Gastrocnemius medialis (tissue), 4 donors: ENCODE measurements at regions of chr20 and their contacts with region 1.

Region 1: GRCh38 chr20:32031007-32031958 is 20.8 kb upstream of the HCK start:
- DNase-seq: peak; percentile 40 to 56
- ATAC-seq: peak; percentile 71 to 80
- H3K4me3 ChIP-seq: peak overlapping the region; percentile 25 to 43 (median 35)
- H3K27ac ChIP-seq: no peak overlapping the region
- H3K4me1 ChIP-seq: peaks cover 0 to 3% of the 10 kb centered on the region in 2 donors
- H3K27me3 ChIP-seq: peaks cover 8 to 12% (median 12%) of the 10 kb centered on the region in 3 donors
- CTCF ChIP-seq: peak; percentile 79 to 89 (median 88)
- POLR2A ChIP-seq: no peak

Region 2: GRCh38 chr20:31849455-31849925 is 181.8 kb before region 1 on chr20:
- in situ Hi-C with region 1: loop called in 2 of 4 experiments (anchors 10 kb)
- intact Hi-C with region 1: loop called (anchors 5 kb)
- DNase-seq: no peak
- ATAC-seq: no peak
- H3K4me3 ChIP-seq: no peak overlapping the region
- H3K27ac ChIP-seq: no peak overlapping the region
- H3K4me1 ChIP-seq: peaks cover 3 to 11% of the 10 kb centered on the region in 2 donors
- H3K27me3 ChIP-seq: peaks cover 0 to 9% (median 4%) of the 10 kb centered on the region in 3 donors
- CTCF ChIP-seq: no peak
- POLR2A ChIP-seq: no peak

Region 3: DNA sequence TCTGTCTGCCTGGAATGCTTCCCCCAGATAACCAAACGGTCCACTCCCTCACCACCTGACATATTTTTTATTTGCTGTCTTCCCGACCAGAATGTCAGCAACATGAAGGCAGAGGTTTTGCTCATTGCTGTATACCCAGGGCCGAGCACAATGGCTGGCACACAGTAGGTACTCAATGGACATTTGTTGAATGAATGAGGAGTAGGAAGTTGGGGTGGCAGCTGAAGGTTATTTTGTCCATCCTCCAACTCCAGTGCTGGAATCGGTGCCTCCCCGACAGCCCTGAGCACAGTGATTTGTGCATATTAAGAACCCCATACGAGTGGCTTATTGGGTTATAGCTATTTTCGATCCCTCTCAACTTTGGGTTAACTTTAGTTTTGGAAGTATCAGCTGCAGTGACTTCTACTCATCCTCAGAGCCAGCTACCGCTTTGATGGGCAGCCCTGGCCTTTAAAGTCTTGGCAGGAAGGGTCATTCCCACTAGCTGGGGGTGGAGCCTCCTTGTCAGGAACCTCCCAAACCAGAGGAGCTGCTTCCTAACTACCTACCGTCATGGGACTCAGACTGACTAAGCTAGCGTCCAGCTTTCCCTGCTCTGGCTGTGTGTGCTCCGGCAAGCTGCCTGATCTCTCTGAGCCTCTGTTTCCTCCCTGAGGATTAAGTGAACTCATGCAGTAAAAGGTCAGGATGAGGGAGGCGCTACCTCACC is 171.1 kb before region 1 on chr20:
- in situ Hi-C with region 1: loop called in 2 of 4 experiments (anchors 10 kb)
- intact Hi-C with region 1: no loop called
- DNase-seq: no peak
- ATAC-seq: no peak
- H3K4me3 ChIP-seq: peak overlapping the region in 1 of 4 donors; percentile 56
- H3K27ac ChIP-seq: no peak overlapping the region
- H3K4me1 ChIP-seq: peaks cover 4 to 13% of the 10 kb centered on the region in 2 donors
- H3K27me3 ChIP-seq: peaks cover 27 to 42% (median 32%) of the 10 kb centered on the region in 3 donors
- CTCF ChIP-seq: no peak
- POLR2A ChIP-seq: no peak

Region 4: DNA sequence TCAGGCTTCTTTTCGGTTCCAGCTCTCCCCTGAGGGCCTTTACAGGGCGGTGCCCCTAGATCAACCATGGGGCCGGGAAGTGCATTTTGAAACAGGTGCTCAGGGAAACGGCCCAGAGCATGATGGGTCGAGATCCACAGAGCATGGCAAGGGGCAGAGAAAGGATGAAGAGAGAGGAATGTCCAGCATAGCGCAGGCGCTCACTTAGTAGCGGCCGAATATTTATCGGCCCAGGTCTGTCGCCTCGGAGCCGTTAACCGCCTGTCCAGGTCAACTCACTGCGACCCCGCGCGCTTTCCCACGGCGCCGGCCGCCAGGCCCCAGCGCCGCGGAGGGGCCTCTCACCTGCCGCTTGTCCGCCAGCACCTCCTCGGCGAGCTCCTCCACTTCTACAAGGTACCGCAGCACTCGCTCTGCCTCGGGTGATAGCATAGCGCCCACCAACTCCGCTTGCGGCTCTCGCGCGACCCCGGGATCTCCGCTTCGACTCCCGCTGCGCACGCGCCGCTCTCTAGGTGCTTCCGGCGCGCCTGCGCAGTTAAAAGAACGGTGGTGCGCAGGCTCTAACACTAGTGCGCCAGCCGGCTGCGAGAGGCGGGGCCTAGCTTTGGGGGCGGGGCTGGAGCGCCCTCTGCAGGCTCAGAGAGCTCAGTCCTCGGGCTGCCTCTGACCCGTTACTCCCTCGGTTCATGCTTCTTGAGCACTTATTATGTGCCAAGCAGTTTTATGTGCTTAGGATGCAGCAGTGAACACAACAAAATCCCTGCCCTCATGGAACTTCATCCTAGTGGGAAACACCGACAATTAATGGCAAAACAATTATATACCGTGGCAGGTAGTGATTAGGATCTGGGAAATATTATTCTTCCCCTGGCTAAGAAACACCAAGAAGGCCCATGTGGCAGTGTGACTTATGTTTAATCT is 79.5 kb before region 1 on chr20 and contains the start of gene PDRG1:
- in situ Hi-C with region 1: no loop called
- intact Hi-C with region 1: loop called (anchors 2 kb)
- DNase-seq: peak; percentile 90 to 93
- ATAC-seq: peak; percentile 95 to 97
- H3K4me3 ChIP-seq: peak within 1 kb of the TSS; percentile 87 to 99 (median 90)
- H3K27ac ChIP-seq: peak within 1 kb of the TSS; percentile 83 to 92 (median 86)
- H3K4me1 ChIP-seq: peaks cover 10 to 11% of the 10 kb centered on the region in 2 donors
- H3K27me3 ChIP-seq: no peaks in the 10 kb centered on the region
- CTCF ChIP-seq: peak; percentile 83 to 97 (median 89)
- POLR2A ChIP-seq: peak; percentile 72 to 77
- total RNA-seq, gene PDRG1: 7.0 to 12.9 (median 9.6) TPM

Region 5: DNA sequence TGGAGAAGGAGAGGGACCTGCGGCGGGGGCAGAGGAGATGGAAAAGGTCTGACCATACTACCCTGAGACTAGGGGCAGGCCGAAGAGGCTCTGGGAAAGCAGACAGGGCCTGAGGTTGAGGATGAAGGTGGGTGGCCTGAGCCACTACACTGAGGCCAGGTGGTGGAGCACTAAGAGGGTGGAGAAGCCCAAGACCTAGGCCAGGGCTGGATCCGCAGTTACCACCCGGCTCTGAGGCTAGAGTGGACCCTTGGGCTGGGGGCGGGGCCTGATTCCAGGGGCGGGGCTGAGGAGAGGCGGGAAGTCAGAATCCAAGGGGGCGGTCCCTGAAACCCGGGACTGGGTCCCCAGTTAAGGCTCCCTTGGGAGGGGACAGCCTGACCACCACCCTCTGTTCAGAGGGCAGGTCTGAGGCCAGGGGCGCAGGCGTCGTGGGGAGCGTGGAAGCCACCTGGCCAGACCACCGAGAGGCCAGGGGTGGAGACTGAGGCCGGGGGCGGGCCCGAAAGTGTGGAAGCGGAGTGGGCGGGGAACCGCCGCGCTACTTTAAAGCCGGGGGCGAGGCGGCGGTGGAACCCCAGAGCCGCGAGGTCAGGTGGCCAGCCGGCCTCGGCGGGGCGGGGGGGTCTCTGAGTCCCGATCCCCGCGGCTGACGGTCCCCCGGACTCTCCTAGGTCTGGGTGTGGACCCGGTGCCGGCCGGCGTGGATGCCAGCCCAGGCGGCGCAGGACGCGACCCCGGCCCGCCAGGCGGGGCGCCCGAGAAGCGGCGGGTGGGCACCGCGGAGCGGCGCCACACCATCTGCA is 12.8 kb before region 1 on chr20:
- in situ Hi-C with region 1: no loop called
- intact Hi-C with region 1: no loop called
- DNase-seq: peak in 1 of 2 donors; percentile 16
- ATAC-seq: no peak
- H3K4me3 ChIP-seq: peak overlapping the region; percentile 50 to 61 (median 54)
- H3K27ac ChIP-seq: peak overlapping the region in 1 of 4 donors; percentile 40
- H3K4me1 ChIP-seq: peaks cover 0 to 4% of the 10 kb centered on the region in 2 donors
- H3K27me3 ChIP-seq: peaks cover 43 to 62% (median 52%) of the 10 kb centered on the region in 3 donors
- CTCF ChIP-seq: no peak
- POLR2A ChIP-seq: peak in 1 of 2 donors; percentile 32

Region 6: DNA sequence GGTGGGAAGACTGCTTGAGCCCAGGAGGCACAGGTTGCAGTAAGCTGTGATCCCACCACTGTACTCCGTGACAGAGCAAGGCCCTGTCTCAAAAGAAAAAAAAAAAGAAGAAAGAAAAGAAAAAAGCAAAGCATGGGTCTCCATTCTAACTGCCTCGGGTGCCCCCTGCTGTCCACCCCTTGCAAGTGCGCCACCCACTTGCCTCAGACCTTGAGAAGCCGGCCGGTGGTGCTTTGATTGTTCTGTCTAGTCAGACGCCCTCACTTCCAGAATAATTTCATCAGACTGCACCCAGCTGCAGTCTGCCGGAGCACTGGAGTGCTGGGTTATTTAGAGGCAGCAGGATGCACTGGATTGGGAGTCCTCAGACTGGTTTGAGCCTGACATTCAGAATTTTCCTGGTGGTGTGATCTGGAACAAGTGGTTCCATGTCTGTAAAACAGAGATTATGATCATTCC is 60.6 kb after region 1 on chr20:
- in situ Hi-C with region 1: no loop called
- intact Hi-C with region 1: loop called (anchors 5 kb)
- DNase-seq: peak; percentile 32 to 48
- ATAC-seq: peak; percentile 61 to 80
- H3K4me3 ChIP-seq: no peak overlapping the region
- H3K27ac ChIP-seq: no peak overlapping the region
- H3K4me1 ChIP-seq: no peaks in the 10 kb centered on the region
- H3K27me3 ChIP-seq: no peaks in the 10 kb centered on the region
- CTCF ChIP-seq: peak; percentile 32 to 93 (median 61)
- POLR2A ChIP-seq: no peak